Right lobe of liver (tissue), 6 donors: ENCODE measurements at regions of chr19 and their contacts with region 1.

Region 1: GRCh38 chr19:14689598-14690503 is at the start of gene ZNF333:
- DNase-seq: peak; percentile 96 to 97 (median 97)
- ATAC-seq: peak; percentile 97 to 98 (median 98)
- H3K4me3 ChIP-seq: peak within 1 kb of the TSS; percentile 58 to 77 (median 72)
- H3K27ac ChIP-seq: peak within 1 kb of the TSS; percentile 85 to 93 (median 91)
- H3K4me1 ChIP-seq: peaks cover 0 to 9% (median 0%) of the 10 kb centered on the region in 4 donors
- H3K27me3 ChIP-seq: no peaks in the 10 kb centered on the region
- CTCF ChIP-seq: no peak
- POLR2A ChIP-seq: peak; percentile 42
- total RNA-seq, gene ZNF333: 2.5 to 6.1 (median 3.8) TPM

Region 2: DNA sequence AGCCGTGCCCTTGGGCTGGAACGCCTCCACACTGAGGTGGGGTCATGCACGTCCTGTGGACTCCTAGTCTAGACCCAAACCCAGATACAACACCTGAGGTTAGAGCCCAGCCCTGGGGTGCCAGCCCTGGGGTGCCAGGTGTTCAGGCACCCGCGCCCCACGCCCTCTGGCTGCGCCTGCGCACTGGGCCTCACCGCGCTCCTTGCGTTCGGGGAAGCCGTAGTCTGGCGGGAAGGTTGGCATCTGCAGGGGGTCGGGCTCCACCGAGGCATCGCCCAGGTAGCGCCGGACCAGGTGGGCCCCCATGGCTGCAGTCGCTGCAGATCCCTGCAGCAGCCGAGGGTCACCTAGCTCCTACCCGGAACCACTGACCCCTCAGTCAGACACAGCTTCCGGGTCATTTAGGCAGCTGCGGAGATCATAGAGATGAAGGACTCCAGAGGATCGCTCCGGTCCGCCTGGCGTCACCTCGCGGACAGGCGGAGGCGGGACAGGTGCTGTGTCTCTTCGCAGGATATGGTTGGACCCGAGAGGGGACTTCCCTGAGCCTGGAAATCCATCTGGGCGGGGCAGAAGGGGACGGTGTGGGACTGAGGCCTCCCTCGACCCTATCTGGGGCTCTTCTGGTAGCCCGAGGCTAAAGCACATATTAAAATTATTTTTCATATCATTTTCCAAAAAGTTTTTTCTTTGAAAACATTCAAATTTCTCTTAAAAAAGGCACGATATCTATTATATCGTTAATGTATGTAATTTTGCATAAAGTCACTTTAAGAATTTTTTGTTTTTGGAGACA is 118.0 kb before region 1 on chr19 and contains the start of gene NDUFB7:
- intact Hi-C with region 1: loop called in 1 of 2 experiments (anchors 10 kb)
- DNase-seq: peak; percentile 91 to 93 (median 92)
- ATAC-seq: peak; percentile 96 to 98 (median 98)
- H3K4me3 ChIP-seq: peak within 1 kb of the TSS; percentile 81 to 100 (median 96)
- H3K27ac ChIP-seq: peak within 1 kb of the TSS; percentile 66 to 86 (median 75)
- H3K4me1 ChIP-seq: peaks cover 0 to 8% (median 4%) of the 10 kb centered on the region in 4 donors
- H3K27me3 ChIP-seq: no peaks in the 10 kb centered on the region
- CTCF ChIP-seq: peak; percentile 57 to 92 (median 82)
- POLR2A ChIP-seq: peak; percentile 55
- total RNA-seq, gene NDUFB7: 81.7 to 275 (median 112) TPM

Region 3: DNA sequence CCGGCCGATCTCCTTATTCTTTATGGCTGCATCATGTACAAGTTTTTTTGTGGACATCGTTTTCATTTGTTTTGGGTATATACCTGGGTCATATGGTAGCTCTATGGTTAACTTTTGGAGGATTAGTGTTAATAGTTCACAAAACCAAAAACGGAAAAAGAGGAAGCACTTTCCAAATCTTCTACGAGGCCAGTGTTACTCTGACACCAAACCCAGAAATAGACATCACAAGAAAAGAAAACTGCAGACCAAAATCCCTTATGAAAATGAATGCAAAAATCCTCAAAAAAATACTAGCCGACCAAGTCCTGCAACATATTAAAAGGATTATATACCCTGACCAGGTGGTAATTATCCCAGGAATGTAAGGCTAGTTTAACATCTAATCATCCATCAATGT is 58.8 kb after region 1 on chr19:
- intact Hi-C with region 1: no loop called
- DNase-seq: no peak
- ATAC-seq: no peak
- H3K4me3 ChIP-seq: no peak overlapping the region
- H3K27ac ChIP-seq: no peak overlapping the region
- H3K4me1 ChIP-seq: no peaks in the 10 kb centered on the region
- H3K27me3 ChIP-seq: no peaks in the 10 kb centered on the region
- CTCF ChIP-seq: no peak
- POLR2A ChIP-seq: no peak

Region 4: DNA sequence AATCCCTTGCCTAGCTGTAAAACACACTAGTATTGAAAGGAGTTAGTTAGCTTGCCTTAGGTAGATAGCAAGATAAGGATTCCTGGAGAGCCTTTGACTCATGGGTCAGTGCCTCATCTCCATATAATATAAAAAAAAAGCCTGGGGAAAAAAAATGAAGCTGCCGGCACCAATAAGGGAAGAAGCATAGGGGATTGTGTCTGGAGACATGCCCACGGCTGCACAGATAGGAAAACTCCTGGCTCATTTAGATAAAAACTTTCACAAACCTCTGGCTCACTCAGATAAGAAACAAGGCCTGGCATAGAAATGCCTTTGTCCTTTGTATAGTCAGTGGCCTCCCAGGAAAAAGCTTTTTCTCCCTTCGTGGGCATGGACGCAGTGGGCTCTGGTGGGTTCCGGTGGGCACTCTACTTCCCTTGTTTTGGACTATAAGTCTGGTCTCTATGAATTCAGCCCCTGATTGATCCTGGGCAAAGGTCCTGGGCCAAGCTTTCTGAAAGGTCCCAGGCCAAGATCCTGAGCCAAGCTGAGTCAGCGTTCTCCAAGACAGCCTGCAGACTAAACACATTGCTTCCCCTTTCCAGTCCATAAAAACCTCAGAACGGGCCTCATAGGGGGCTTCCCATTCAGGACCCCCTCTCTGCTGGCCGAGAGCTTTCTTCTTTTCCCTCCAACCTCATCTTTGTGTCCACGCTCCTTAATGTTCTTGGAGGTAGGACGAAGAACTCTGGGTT is 201.0 kb after region 1 on chr19:
- intact Hi-C with region 1: no loop called
- DNase-seq: no peak
- ATAC-seq: peak in 3 of 4 donors; percentile 22 to 37 (median 35)
- H3K4me3 ChIP-seq: no peak overlapping the region
- H3K27ac ChIP-seq: no peak overlapping the region
- H3K4me1 ChIP-seq: no peaks in the 10 kb centered on the region
- H3K27me3 ChIP-seq: no peaks in the 10 kb centered on the region
- CTCF ChIP-seq: no peak
- POLR2A ChIP-seq: no peak